ENCODE measurements at regions of chr5 and their contacts with region 1.

Region 1: DNA sequence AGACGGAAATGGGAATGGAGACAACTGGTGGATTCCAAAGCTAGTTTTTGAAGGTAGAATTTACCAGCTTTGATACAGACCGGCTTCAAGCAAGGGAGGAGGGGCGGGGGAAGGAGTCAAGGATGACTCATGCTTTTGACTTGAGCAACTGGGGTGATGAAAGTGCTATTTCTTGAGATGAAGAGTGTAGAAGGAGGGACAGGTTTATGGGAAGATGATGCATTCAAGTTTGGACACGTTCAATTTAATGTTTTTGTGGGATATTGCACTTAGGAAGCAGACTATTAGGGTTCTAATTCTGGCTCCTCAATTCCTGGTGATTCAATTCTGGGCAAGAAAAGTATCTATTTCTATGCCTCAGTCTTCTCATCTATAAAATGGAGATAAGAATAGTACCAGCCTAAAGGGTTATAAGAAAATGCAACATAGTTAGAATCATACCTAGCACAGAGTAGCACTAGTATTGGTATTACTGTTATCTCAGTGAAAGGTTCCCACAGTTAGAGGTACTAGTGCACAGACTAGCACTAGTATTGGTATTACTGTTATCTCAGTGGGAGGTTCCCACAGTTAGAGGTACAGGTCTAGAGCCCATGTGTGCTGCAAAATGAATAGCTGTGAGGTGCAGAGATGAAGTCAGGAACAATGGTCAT is 4.6 kb downstream of the NIPAL4 start:
- DNase-seq: peak; percentile 92
- H3K4me3 Mint-ChIP-seq: peak overlapping the region; percentile 28
- H3K27ac Mint-ChIP-seq: peak overlapping the region; percentile 89
- H3K4me1 Mint-ChIP-seq: peaks cover 36% of the 10 kb centered on the region
- H3K27me3 Mint-ChIP-seq: peaks cover 16% of the 10 kb centered on the region

Region 2: DNA sequence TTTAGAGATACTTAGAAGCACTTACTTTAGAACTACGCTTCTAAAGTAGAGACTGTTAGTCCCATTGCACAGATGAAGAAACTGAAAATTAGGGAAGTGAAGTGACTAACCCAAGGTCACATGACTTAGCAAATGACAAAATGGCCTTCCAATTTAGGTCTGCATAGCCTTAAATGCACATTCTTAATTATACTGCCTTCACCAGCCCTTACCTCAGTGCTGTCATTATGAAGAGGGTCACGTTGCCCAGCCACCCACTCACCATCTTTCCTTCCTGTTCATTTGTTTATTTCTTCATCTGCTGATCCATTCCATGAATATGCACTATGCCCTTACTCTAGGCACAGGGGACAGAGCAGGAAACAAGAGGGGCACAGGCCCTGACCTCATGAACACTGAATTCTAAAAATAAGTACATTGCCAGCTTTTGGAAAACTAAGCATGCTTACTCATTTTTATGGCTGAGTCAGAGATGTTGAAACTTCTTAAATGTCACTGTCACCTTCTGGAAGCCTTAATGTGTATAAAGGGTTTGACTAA is 364.4 kb before region 1 on chr5:
- CTCF ChIA-PET with region 1: no interaction called
- intact Hi-C with region 1: loop called (anchors 1 kb)
- DNase-seq: peak; percentile 71
- H3K4me3 Mint-ChIP-seq: peak overlapping the region; percentile 32
- H3K27ac Mint-ChIP-seq: peak overlapping the region; percentile 96
- H3K4me1 Mint-ChIP-seq: peaks cover 29% of the 10 kb centered on the region
- H3K27me3 Mint-ChIP-seq: no peaks in the 10 kb centered on the region

Region 3: DNA sequence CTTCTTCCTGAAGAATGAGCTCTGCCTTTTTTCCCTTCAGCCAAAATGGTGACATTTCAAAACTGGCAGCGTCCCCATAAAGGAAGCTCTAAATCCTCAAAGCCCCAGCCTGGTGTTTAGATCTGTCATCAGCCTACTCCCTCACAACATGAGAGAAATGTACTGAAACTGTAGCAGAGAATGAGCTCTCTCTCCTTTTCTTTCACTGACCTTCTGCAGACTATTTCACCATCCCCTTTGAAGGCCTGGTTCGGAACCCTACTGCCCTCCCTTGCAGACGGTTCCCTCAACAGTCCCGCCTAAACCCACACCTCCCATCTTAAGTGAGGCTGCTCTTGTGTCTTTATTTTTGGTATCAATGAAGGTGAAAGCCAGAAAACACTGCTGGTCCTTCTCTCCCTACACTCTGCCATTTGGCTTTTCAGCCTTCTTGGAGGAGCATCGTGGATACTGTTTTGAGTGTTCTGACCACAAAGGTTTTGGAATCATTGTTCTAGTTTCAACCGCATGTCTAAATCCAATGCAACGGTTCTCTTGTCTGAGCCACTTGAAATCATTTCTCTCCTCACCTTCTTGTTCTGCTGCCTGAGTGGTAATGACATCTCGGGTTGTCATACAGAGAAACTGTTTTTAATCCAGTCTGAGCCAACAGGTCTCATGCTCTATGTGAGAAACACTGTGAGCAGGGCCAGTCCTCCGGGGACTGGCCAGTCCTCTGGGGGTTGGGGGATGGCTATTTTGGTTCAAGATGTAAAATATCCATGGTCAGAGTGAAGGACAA is 245.0 kb before region 1 on chr5:
- CTCF ChIA-PET with region 1: no interaction called
- intact Hi-C with region 1: loop called (anchors 5 kb)
- DNase-seq: peak; percentile 65
- H3K4me3 Mint-ChIP-seq: peak overlapping the region; percentile 45
- H3K27ac Mint-ChIP-seq: peak overlapping the region; percentile 97
- H3K4me1 Mint-ChIP-seq: peaks cover 81% of the 10 kb centered on the region
- H3K27me3 Mint-ChIP-seq: no peaks in the 10 kb centered on the region

Region 4: DNA sequence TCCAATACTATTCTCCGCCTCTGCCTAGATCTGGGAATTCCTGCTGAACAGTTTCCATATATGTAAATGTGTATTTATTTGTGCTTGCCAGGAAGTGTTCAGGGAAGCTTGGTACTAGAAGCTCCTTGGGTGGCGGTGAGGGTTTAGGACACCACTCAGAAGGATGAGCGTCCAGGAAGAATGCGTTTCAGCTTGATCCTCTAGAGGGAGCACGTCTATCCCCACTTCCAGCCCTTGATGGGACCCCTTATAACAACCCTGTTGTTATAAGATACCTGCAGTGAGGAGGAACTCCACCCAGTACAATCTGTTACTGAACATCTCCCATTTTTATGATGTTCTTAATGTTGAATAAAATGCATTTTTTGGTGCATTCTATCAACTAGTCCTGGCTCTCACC is 109.8 kb before region 1 on chr5:
- CTCF ChIA-PET with region 1: no interaction called
- intact Hi-C with region 1: loop called (anchors 1 kb)
- DNase-seq: no peak
- H3K4me3 Mint-ChIP-seq: no peak overlapping the region
- H3K27ac Mint-ChIP-seq: no peak overlapping the region
- H3K4me1 Mint-ChIP-seq: peaks cover 36% of the 10 kb centered on the region
- H3K27me3 Mint-ChIP-seq: no peaks in the 10 kb centered on the region

Region 5: GRCh38 chr5:157431544-157432200 is 33.0 kb before region 1 on chr5:
- CTCF ChIA-PET with region 1: interaction called, 76 read pairs
- intact Hi-C with region 1: no loop called
- DNase-seq: peak; percentile 41
- H3K4me3 Mint-ChIP-seq: no peak overlapping the region
- H3K27ac Mint-ChIP-seq: no peak overlapping the region
- H3K4me1 Mint-ChIP-seq: peaks cover 3% of the 10 kb centered on the region
- H3K27me3 Mint-ChIP-seq: peaks cover 9% of the 10 kb centered on the region

Region 6: DNA sequence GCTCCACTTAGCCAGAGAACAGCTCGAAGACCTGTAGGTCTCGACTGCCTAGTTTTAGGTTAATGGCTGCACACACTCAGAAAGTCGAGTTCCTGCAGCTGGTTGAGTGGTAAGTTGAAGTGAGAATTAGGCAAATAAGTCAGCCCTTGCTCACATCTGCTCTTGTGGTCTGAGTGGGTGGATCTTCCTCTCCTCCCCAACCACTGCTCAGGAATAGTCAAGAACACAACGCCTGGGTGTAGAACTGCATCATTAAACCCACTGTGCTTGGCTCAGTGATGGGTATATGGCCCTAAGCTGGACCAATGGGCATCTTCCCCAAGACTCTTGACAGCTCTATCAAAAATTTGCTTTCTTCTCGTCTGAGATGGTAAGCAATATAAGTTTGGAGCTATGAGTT is 131.8 kb after region 1 on chr5:
- CTCF ChIA-PET with region 1: no interaction called
- intact Hi-C with region 1: loop called (anchors 1 kb)
- DNase-seq: peak; percentile 84
- H3K4me3 Mint-ChIP-seq: peak overlapping the region; percentile 13
- H3K27ac Mint-ChIP-seq: peak overlapping the region; percentile 92
- H3K4me1 Mint-ChIP-seq: peaks cover 96% of the 10 kb centered on the region
- H3K27me3 Mint-ChIP-seq: no peaks in the 10 kb centered on the region

Region 7: GRCh38 chr5:157743163-157744050 is 278.8 kb after region 1 on chr5 and contains the start of gene LSM11:
- CTCF ChIA-PET with region 1: interaction called, 4 read pairs
- intact Hi-C with region 1: loop called (anchors 2 kb)
- DNase-seq: peak; percentile 89
- H3K4me3 Mint-ChIP-seq: peak within 1 kb of the TSS; percentile 92
- H3K27ac Mint-ChIP-seq: peak within 1 kb of the TSS; percentile 71
- H3K4me1 Mint-ChIP-seq: peaks cover 32% of the 10 kb centered on the region
- H3K27me3 Mint-ChIP-seq: no peaks in the 10 kb centered on the region
- total RNA-seq, gene LSM11: 8.2 to 8.8 TPM

Measured in activated naive CD4-positive, alpha-beta T cell treated with anti-CD3 and anti-CD28 coated beads for 36 hours (primary cell).